ENCODE measurements at regions of chr4 and their contacts with region 1.

Region 1: DNA sequence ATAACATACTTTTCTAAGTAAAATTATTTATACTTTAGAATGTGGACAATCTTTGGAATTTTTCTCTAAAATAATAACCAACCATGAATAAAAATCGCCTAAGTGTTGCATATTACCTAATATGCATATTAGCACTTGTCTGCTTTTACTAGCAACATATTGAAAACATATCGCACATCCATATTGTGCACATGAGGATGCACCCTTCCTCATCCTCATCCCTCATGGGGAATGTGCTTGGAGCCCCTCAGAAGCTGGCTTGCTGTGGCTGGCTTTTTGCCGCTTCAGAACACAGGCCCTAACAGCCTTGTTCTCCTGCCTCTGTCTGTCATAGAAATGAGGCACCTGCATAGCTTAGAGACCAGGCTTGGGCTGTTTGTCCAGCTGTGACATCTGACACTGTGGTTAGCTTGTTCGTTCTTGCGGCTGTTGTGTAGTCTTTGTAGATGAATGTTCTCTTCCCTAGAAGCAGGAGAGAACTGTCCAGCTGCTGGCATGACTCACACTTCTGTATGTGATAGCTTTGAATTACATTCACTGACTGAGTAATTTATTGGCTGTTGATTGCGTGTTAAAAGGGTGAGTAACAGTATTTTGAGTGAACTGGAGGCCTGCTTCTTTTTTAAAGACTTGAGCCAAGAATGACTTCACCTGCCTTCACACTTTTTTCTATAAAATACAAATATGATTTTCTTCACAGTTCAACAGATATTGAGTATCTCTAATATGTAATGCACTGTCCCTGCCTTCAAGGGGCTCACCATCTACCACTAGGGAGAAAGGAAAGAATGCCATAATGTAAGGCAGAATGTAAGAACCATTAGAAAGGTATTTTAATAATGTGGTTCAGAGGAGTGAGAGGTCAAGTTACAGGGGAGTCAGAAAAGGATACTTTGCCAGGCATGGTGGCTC is 81.9 kb downstream of the HMGB2 start:
- DNase-seq: no peak
- H3K4me3 ChIP-seq: no peak overlapping the region
- H3K27ac ChIP-seq: no peak overlapping the region
- H3K4me1 ChIP-seq: peaks cover 2 to 23% (median 4%) of the 10 kb centered on the region in 4 experiments; a peak in 5 of 7 replicates
- H3K27me3 ChIP-seq: no peaks in the 10 kb centered on the region; a peak in 1 of 7 replicates
- CTCF ChIP-seq: no peak
- EP300 ChIP-seq: no peak
- POLR2A ChIP-seq: no peak
- RAD21 ChIP-seq: no peak

Region 2: GRCh38 chr4:173128199-173128890 is 123.9 kb before region 1 on chr4:
- CTCF ChIA-PET with region 1: no interaction called
- POLR2A ChIA-PET with region 1: no interaction called
- DNase-seq: no peak
- H3K4me3 ChIP-seq: no peak overlapping the region
- H3K27ac ChIP-seq: no peak overlapping the region
- H3K4me1 ChIP-seq: no peaks in the 10 kb centered on the region
- H3K27me3 ChIP-seq: no peaks in the 10 kb centered on the region
- CTCF ChIP-seq: no peak
- EP300 ChIP-seq: no peak
- POLR2A ChIP-seq: no peak
- RAD21 ChIP-seq: no peak

Region 3: DNA sequence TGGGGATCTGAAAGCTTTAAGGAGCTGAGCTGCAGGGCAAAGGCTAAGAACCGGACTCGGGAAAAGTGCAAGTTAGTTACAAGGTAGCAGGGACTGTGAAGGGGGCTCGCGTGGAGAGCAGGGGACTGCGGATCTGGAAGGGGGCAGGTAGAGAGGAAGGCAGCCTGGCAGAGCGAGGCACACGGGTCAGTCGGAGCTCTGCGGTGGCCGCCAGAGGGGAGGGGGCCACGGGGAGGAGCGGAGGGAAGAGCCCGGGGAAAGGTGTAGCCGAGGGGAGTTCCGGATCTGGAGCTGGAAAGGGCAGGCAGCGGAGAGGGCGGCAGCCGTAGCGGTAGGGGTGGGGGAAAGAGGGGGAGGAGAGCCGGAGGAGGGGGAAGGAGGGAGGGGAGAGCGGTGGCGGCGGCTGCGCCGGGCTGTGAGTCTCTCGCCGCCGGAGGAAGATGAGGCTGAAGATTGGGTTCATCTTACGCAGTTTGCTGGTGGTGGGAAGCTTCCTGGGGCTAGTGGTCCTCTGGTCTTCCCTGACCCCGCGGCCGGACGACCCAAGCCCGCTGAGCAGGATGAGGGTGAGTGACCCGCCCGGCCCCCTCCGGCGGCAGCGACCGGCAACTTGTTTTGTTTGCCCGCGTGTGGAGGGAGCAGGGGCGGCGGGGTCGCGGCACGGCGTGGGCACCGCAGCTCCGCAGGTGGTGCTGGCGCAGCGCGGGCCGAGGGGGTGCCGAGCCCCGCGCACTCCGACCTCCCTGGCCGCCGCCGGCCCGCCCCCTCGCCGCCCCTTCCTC is 83.7 kb before region 1 on chr4 and contains the start of gene GALNT7:
- CTCF ChIA-PET with region 1: interaction called, 12 read pairs
- POLR2A ChIA-PET with region 1: interaction called, 4 read pairs
- DNase-seq: peak; percentile 54 to 83
- H3K4me3 ChIP-seq: peak within 1 kb of the TSS; percentile 82 to 93 (median 86)
- H3K27ac ChIP-seq: peak within 1 kb of the TSS; percentile 86; the same call in 1 of the 2 replicates
- H3K4me1 ChIP-seq: peaks cover 8 to 27% (median 19%) of the 10 kb centered on the region in 4 experiments
- H3K27me3 ChIP-seq: no peaks in the 10 kb centered on the region
- CTCF ChIP-seq: no peak
- EP300 ChIP-seq: peak in 1 of 2 experiments; percentile 34; a peak in 1 of 3 replicates
- POLR2A ChIP-seq: peak; percentile 58 to 78
- RAD21 ChIP-seq: no peak
- total RNA-seq, gene GALNT7: 78.9 and 85.5 TPM in 2 replicates

Region 4: GRCh38 chr4:173334085-173334772 is 81.9 kb after region 1 on chr4 and contains the start of gene HMGB2:
- CTCF ChIA-PET with region 1: no interaction called
- POLR2A ChIA-PET with region 1: no interaction called
- DNase-seq: peak; percentile 99 to 100
- H3K4me3 ChIP-seq: peak within 1 kb of the TSS; percentile 73 to 99 (median 94)
- H3K27ac ChIP-seq: peak within 1 kb of the TSS; percentile 100
- H3K4me1 ChIP-seq: peaks cover 0 to 3% (median 3%) of the 10 kb centered on the region in 4 experiments; a peak in 6 of 7 replicates
- H3K27me3 ChIP-seq: no peaks in the 10 kb centered on the region
- CTCF ChIP-seq: no peak
- EP300 ChIP-seq: peak in 1 of 2 experiments; percentile 11; a peak in 1 of 3 replicates
- POLR2A ChIP-seq: peak; percentile 95 to 99
- RAD21 ChIP-seq: no peak
- total RNA-seq, gene HMGB2: 212 and 218 TPM in 2 replicates

Region 5: DNA sequence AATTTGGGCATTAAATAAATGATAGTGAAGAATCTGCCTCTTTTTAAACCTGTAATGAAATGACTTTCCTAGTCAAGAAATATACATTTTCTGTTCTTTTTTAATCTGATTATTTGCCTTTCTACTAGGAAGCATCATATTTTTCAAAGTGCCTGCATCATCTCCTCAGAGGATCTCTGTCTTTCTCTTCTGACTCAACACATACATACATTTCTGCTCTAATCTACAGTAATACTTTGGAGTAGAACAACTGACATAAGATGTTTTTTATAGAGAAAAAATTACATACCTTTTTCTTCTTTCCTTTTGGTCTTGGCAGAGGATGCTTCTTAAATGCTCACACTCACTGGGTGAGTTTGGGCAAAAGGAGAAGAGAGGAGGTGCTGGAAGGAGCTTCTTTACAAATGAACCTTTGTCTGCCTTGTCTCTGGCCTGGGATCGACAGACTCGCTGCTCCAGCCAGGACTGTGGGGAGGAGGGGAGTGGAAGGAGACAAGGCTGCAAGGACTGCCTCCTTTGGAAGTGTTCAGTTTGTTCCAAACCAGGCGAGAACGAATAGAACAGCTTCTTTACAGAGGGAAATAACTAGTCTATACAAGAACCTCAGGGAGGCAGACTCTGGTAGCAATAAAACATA is 146.6 kb after region 1 on chr4 and contains the start of gene SCRG1:
- CTCF ChIA-PET with region 1: no interaction called
- POLR2A ChIA-PET with region 1: no interaction called
- DNase-seq: no peak
- H3K4me3 ChIP-seq: no peak within 1 kb of the TSS
- H3K27ac ChIP-seq: no peak within 1 kb of the TSS
- H3K4me1 ChIP-seq: no peaks in the 10 kb centered on the region
- H3K27me3 ChIP-seq: no peaks in the 10 kb centered on the region
- CTCF ChIP-seq: no peak
- EP300 ChIP-seq: no peak
- POLR2A ChIP-seq: no peak
- RAD21 ChIP-seq: no peak
- total RNA-seq, gene SCRG1: not detected in 2 replicates